B cell (primary cell): ENCODE measurements at regions of chr5 and their contacts with region 1.

Region 1: GRCh38 chr5:34007621-34008600 is at the start of gene AMACR:
- DNase-seq: peak; percentile 87
- ATAC-seq: peak; percentile 90
- H3K4me3 ChIP-seq: peak within 1 kb of the TSS; percentile 76 to 98 (median 92)
- H3K4me3 Mint-ChIP-seq: peak within 1 kb of the TSS; percentile 95
- H3K27ac ChIP-seq: peak within 1 kb of the TSS; percentile 72 to 77
- H3K27ac Mint-ChIP-seq: peak within 1 kb of the TSS; percentile 92
- H3K4me1 ChIP-seq: peaks cover 9 to 15% of the 10 kb centered on the region in 2 donors
- H3K4me1 Mint-ChIP-seq: peaks cover 22% of the 10 kb centered on the region
- H3K27me3 ChIP-seq: no peaks in the 10 kb centered on the region
- H3K27me3 Mint-ChIP-seq: no peaks in the 10 kb centered on the region
- CTCF ChIP-seq: no peak
- total RNA-seq, gene AMACR: 4.4 and 5.8 TPM in 2 replicates

Region 2: GRCh38 chr5:32174011-32174870 is 1833.7 kb before region 1 on chr5 and contains the start of gene GOLPH3:
- CTCF ChIA-PET with region 1: no interaction called
- POLR2A ChIA-PET with region 1: no interaction called
- intact Hi-C with region 1: no loop called
- DNase-seq: peak; percentile 91
- ATAC-seq: peak; percentile 85
- H3K4me3 ChIP-seq: peak within 1 kb of the TSS; percentile 65 to 92 (median 80)
- H3K4me3 Mint-ChIP-seq: peak within 1 kb of the TSS; percentile 96
- H3K27ac ChIP-seq: peak within 1 kb of the TSS; percentile 95 to 97
- H3K27ac Mint-ChIP-seq: peak within 1 kb of the TSS; percentile 96
- H3K4me1 ChIP-seq: peaks cover 13 to 19% of the 10 kb centered on the region in 2 donors
- H3K4me1 Mint-ChIP-seq: peaks cover 36% of the 10 kb centered on the region
- H3K27me3 ChIP-seq: no peaks in the 10 kb centered on the region
- H3K27me3 Mint-ChIP-seq: no peaks in the 10 kb centered on the region
- CTCF ChIP-seq: no peak
- total RNA-seq, gene GOLPH3: 58.8 and 62.6 TPM in 2 replicates

Region 3: GRCh38 chr5:33975852-33976251 is 32.1 kb before region 1 on chr5:
- CTCF ChIA-PET with region 1: no interaction called
- POLR2A ChIA-PET with region 1: no interaction called
- intact Hi-C with region 1: no loop called
- DNase-seq: no peak
- ATAC-seq: no peak
- H3K4me3 ChIP-seq: no peak overlapping the region
- H3K4me3 Mint-ChIP-seq: no peak overlapping the region
- H3K27ac ChIP-seq: no peak overlapping the region
- H3K27ac Mint-ChIP-seq: no peak overlapping the region
- H3K4me1 ChIP-seq: no peaks in the 10 kb centered on the region
- H3K4me1 Mint-ChIP-seq: no peaks in the 10 kb centered on the region
- H3K27me3 ChIP-seq: peaks cover 0 to 5% (median 0%) of the 10 kb centered on the region in 4 experiments
- H3K27me3 Mint-ChIP-seq: peaks cover 12% of the 10 kb centered on the region
- CTCF ChIP-seq: no peak

Region 4: DNA sequence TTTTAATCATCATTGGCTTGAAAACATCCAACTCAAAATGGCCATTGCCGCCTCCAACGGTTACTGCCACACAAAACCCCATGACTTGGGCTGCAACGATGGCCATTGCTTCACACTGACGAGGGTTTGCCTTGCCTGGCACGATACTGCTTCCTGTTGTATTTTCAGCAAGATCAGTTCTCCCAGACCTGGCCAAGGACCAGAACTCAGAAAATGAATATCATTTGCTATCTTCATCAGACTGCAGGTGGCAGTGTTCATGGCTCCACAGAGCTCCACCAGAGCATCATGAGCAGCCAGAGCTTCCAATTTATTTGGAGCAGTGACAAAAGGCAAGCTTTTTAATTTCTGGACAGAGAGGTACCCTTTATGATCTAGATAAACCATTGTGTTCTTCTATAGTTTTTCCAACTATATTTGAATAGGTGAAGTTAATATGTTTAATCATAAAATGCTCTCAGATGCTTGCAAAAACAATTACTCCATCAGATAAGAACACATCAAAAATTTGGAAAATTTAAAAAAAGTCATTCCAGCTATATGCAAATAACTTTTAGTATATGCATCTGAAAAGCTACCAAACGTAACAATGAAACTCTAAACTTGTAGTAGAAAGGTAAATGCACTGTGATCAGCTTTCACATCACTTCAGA is 10.5 kb before region 1 on chr5:
- CTCF ChIA-PET with region 1: interaction called, 10 read pairs
- POLR2A ChIA-PET with region 1: no interaction called
- intact Hi-C with region 1: no loop called
- DNase-seq: peak; percentile 39
- ATAC-seq: peak; percentile 49
- H3K4me3 ChIP-seq: no peak overlapping the region
- H3K4me3 Mint-ChIP-seq: no peak overlapping the region
- H3K27ac ChIP-seq: no peak overlapping the region
- H3K27ac Mint-ChIP-seq: no peak overlapping the region
- H3K4me1 ChIP-seq: no peaks in the 10 kb centered on the region
- H3K4me1 Mint-ChIP-seq: no peaks in the 10 kb centered on the region
- H3K27me3 ChIP-seq: no peaks in the 10 kb centered on the region
- H3K27me3 Mint-ChIP-seq: no peaks in the 10 kb centered on the region
- CTCF ChIP-seq: peak; percentile 56

Region 5: DNA sequence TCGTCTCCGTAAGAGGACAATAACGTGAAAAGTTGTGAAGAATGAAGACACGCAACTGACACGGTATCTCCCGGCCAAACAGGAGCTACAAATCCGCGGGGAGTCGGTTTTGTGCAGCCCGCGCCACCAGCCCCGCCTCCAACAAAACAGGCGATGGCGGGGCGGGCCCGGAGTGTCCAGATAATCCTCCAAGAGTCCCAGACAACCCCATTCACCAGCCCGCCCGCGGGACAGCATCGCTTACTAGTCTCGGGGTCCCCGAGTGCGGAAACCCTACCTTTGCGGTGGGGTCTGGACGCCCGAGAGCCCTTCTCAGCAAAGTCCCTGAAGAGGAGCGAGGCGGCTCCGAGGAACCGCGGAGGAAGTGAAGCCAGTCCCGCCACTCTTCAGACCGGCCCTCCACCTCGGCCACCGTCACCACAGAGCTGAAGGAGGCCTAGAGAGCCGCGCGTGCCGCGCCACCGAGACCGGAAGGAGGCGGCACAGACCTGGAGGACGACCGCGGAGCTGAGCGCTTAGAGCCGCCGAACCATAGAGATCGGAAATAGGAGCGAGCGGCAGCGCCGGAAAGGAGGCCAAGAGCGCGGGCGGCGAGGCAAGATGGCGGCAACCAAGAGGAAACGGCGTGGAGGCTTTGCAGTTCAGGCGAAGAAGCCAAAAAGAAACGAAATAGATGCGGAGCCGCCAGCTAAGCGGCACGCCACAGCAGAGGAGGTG is 907.4 kb after region 1 on chr5 and contains the starts of genes BRIX1 and RAD1:
- CTCF ChIA-PET with region 1: no interaction called
- POLR2A ChIA-PET with region 1: interaction called, 3 read pairs
- intact Hi-C with region 1: loop called (anchors 5 kb)
- DNase-seq: peak; percentile 97
- ATAC-seq: peak; percentile 99
- H3K4me3 ChIP-seq: peak within 1 kb of the TSS; percentile 82 to 99 (median 87)
- H3K4me3 Mint-ChIP-seq: no peak within 1 kb of the TSS
- H3K27ac ChIP-seq: peak within 1 kb of the TSS; percentile 57 to 80
- H3K27ac Mint-ChIP-seq: peak within 1 kb of the TSS; percentile 63
- H3K4me1 ChIP-seq: peaks cover 23 to 26% of the 10 kb centered on the region in 2 donors
- H3K4me1 Mint-ChIP-seq: peaks cover 32% of the 10 kb centered on the region
- H3K27me3 ChIP-seq: no peaks in the 10 kb centered on the region
- H3K27me3 Mint-ChIP-seq: no peaks in the 10 kb centered on the region
- CTCF ChIP-seq: no peak
- total RNA-seq, gene BRIX1: 26.4 and 29.3 TPM in 2 replicates
- total RNA-seq, gene RAD1: 25.9 and 26.1 TPM in 2 replicates